Mammary epithelial cell (primary cell): ENCODE measurements at regions of chr12 and their contacts with region 1.

Region 1: DNA sequence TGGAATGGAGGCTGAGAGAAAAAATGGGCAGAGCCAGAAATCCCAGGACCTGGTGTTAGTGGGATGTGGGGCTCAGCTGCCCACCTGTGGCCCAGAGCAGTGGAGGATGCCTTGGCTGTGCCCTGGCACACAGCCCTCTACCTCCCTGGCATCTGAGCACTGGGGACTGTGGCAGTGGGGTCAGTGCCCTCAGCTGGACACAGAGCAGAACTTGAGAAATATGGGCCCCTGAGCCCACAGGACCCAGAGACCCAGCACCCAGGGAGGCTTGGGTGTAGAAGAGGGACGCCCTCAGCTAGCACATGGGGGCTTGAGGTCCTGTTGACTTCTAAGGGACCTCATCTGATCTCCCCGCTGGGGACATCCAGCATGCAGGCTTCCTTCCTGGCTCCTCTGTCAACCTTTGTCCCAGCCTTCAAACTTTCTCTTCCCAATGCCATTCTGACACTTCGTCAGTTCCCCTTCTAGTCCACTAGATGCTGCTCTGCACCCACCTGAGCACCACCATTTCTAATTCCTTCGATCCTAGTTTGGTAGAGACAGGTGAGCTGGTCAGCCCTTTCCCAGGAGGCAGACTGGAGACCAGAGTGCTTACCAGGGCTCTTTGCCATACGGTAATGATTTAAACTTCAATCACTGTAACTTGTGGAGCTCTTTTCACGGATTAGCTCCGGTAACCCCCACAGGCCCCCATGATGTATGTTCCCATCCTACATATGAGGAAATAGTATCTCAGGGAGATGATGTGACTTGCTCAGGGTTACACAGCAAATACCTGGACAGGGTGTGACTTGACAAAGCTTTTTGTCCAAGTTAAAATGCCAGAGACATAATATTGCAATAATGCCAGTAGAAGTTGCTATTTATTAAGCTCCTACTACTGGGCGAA is 143.7 kb downstream of the ASCL4 start:
- DNase-seq: peak; percentile 39
- H3K4me3 ChIP-seq: no peak overlapping the region
- H3K27ac ChIP-seq: no peak overlapping the region
- H3K4me1 ChIP-seq: peaks cover 6% of the 10 kb centered on the region
- H3K27me3 ChIP-seq: no peaks in the 10 kb centered on the region
- CTCF ChIP-seq: peak; percentile 94 to 95

Region 2: DNA sequence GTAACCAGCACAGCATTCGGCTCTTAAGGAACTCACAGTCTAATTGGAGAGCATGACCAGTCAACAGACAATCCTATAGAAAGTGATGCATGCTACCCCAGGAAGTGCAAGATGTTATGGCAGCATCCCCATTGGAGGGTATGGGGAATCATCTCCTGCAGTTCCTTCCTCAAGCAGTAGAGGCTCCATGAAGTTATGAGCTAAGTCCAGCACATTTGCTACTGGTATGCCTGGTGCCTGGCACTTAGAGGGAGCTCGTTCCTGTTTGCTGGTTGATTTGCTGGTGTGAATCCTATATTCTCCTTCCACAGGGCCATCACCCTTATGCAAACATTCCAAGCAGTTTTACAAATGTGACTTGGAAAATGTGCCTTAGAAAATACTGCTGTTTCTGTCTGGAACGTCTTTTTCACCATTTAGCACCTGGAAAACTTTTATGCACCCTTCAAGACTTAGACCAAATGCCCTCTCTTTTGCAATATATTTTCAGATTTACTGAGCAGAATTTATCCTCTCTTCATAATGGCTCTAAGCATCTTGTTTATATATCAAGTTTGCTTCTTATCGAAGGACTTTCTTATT is 74.8 kb after region 1 on chr12:
- CTCF ChIA-PET with region 1: no interaction called
- dilution Hi-C with region 1: no loop called
- in situ Hi-C with region 1: no loop called
- intact Hi-C with region 1: loop called (anchors 2 kb)
- DNase-seq: peak; percentile 54
- H3K4me3 ChIP-seq: no peak overlapping the region
- H3K27ac ChIP-seq: no peak overlapping the region
- H3K4me1 ChIP-seq: no peaks in the 10 kb centered on the region
- H3K27me3 ChIP-seq: no peaks in the 10 kb centered on the region
- CTCF ChIP-seq: peak; percentile 43 to 71

Region 3: GRCh38 chr12:108193917-108194316 is 275.8 kb after region 1 on chr12:
- CTCF ChIA-PET with region 1: no interaction called
- dilution Hi-C with region 1: no loop called
- in situ Hi-C with region 1: no loop called
- intact Hi-C with region 1: loop called (anchors 1 kb)
- DNase-seq: no peak
- H3K4me3 ChIP-seq: no peak overlapping the region
- H3K27ac ChIP-seq: no peak overlapping the region
- H3K4me1 ChIP-seq: no peaks in the 10 kb centered on the region
- H3K27me3 ChIP-seq: no peaks in the 10 kb centered on the region
- CTCF ChIP-seq: peak; percentile 71 to 84

Region 4: DNA sequence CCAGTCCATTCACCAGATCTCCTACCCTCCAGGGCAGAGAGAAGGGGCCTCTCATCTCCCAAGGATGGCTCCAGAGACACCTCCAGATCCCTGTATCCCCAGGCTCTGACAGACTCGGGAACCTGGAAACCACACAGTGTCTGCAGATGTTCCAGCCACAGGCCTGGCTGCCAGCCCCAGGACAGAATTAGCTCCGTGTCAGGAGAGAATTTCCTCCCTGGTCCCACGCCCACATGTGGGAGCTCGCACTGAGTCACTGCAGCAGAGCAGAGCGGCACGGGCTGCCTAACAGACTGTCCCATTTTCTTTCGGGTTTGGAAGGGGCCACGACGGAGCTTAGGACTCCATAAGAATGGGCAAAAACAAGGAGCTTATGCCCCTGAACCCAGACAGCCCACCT is 387.4 kb after region 1 on chr12:
- CTCF ChIA-PET with region 1: no interaction called
- dilution Hi-C with region 1: no loop called
- in situ Hi-C with region 1: no loop called
- intact Hi-C with region 1: no loop called
- DNase-seq: peak; percentile 73
- H3K4me3 ChIP-seq: peak overlapping the region in 1 of 3 experiments; percentile 2
- H3K27ac ChIP-seq: no peak overlapping the region
- H3K4me1 ChIP-seq: peaks cover 27% of the 10 kb centered on the region
- H3K27me3 ChIP-seq: no peaks in the 10 kb centered on the region
- CTCF ChIP-seq: no peak

Region 5: DNA sequence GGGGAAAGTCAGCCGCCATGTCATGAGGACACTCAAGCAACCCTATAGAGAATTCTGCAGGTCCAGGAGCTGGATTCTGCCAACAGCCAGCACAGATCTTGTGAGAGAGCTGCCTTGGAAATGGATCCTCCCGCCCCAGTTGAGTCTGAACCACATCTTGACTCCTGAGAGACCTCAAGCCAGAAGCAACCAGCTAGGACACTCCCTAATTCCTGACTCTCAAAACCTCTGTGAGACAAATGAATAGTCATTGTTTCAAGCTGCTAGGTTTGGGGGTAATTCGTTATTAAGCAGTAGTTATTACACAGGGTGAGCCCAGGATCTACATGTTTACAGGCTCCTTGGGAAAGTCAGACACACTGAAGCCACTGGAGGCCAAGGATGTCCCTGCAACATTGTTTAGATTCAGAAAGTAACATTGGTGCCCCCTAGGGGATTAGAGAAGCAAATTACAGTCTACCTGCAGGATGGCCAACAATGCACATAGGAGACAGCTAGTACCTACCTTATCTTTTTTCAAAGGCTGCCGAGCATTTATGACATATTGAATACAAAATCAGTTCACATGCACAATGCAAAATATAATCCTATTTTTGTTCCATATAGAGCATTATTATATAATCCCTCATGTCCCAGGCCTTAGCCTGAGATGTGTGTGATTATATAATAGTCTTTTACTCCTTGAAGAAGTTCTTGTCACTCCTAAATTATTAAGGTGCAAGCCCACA is 539.0 kb after region 1 on chr12:
- CTCF ChIA-PET with region 1: no interaction called
- dilution Hi-C with region 1: no loop called
- in situ Hi-C with region 1: no loop called
- intact Hi-C with region 1: loop called (anchors 1 kb)
- DNase-seq: peak; percentile 45
- H3K4me3 ChIP-seq: no peak overlapping the region
- H3K27ac ChIP-seq: no peak overlapping the region
- H3K4me1 ChIP-seq: no peaks in the 10 kb centered on the region
- H3K27me3 ChIP-seq: peaks cover 5% of the 10 kb centered on the region
- CTCF ChIP-seq: peak; percentile 76 to 83

Region 6: GRCh38 chr12:108514973-108515814 is 597.0 kb after region 1 on chr12 and contains the start of gene FICD:
- CTCF ChIA-PET with region 1: interaction called, 3 read pairs
- dilution Hi-C with region 1: no loop called
- in situ Hi-C with region 1: no loop called
- intact Hi-C with region 1: loop called (anchors 1 kb)
- DNase-seq: peak; percentile 99
- H3K4me3 ChIP-seq: peak within 1 kb of the TSS; percentile 71 to 85 (median 81)
- H3K27ac ChIP-seq: peak within 1 kb of the TSS; percentile 52
- H3K4me1 ChIP-seq: peaks cover 9% of the 10 kb centered on the region
- H3K27me3 ChIP-seq: no peaks in the 10 kb centered on the region
- CTCF ChIP-seq: no peak
- total RNA-seq, gene FICD: 5.5 to 5.6 TPM

Region 7: DNA sequence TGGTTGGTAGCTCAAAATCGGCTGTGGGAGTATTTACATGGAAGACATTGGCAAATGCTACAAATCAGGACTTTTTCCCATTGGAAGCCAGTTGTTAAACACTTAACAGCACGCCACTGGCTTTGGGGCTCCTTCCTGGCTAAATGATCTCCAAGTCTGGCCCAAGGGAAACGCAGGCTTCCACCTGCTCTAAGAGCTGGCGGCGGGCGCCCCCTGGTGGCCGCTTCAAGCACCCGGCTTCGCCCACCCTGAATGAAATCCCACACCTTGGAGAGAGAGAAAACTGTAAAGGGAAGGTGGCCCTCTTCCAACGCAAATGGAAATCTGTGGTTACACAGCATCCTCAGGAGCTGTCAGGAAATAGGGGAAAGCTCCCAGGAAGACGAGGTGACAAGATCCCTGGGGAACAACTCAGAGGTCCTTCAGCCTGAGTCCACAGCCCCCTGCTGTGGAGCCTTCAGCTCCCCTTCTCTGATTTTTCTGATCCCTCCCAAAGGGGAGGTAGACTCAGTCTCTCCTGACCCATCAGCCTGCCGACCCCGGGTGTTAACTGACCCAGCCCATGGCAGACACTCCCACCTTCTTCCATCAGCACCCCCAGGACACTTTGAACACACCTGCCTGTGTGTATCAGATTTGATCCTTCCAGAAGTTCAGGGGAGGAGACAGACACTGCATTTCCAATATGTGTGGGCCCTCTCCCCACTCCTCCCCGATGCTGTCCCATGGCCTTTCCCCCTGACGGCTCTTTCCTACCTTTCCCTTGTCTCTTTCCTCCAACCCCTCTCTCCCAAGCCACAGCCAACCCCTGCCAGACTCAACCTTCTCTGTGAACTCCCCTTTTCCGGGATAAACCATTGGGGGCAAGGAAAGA is 700.2 kb after region 1 on chr12:
- CTCF ChIA-PET with region 1: interaction called, 3 read pairs
- dilution Hi-C with region 1: no loop called
- in situ Hi-C with region 1: no loop called
- intact Hi-C with region 1: loop called (anchors 2 kb)
- DNase-seq: peak; percentile 57
- H3K4me3 ChIP-seq: no peak overlapping the region
- H3K27ac ChIP-seq: no peak overlapping the region
- H3K4me1 ChIP-seq: peaks cover 6% of the 10 kb centered on the region
- H3K27me3 ChIP-seq: no peaks in the 10 kb centered on the region
- CTCF ChIP-seq: peak; percentile 72 to 97

Region 8: DNA sequence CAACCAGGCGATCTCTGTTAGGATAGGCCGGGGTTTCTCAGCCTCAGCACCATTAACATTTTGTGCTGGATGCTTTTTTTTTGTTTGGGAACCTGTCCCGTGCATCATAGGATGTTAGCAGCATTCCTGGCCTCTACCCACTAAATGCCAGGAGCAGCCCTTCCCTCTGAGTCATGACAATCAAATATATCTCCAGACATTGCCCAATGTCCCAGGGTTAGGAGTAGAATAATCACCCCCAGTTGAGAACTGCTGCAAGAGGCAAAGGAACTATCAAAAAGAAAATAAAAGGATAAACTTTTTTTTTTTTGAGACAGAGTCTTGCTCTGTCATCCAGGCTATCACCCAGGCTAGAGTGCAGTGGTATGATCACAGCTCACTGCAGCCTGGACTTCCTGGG is 1274.2 kb after region 1 on chr12:
- CTCF ChIA-PET with region 1: interaction called, 20 read pairs
- dilution Hi-C with region 1: no loop called
- in situ Hi-C with region 1: no loop called
- intact Hi-C with region 1: no loop called
- DNase-seq: peak; percentile 83
- H3K4me3 ChIP-seq: no peak overlapping the region
- H3K27ac ChIP-seq: peak overlapping the region; percentile 79
- H3K4me1 ChIP-seq: peaks cover 20% of the 10 kb centered on the region
- H3K27me3 ChIP-seq: no peaks in the 10 kb centered on the region
- CTCF ChIP-seq: no peak